GM12878 (cell line): ENCODE measurements at regions of chr10 and their contacts with region 1.

Region 1: DNA sequence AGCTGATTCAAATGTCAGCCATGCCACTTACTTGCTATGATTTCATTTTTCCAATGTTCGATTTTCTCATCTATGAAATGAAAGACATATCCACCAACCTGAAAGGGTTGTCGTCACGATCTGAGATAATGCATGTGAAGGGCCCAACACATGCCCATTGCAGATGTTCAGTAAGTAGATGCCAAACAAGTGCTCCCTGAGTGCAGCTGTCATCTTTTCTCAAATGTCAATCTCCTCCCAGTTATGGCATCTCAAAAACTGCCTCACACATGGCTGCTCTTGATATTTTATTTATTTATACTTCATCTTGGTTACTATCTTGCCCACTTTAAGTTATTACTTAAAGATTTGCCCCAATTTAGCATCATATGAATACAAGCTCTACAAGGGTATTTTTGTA is 16.8 kb downstream of the CPEB3 start:
- DNase-seq: no peak
- ATAC-seq: no peak
- H3K4me3 ChIP-seq: no peak overlapping the region
- H3K27ac ChIP-seq: no peak overlapping the region
- H3K4me1 ChIP-seq: peaks cover under 1% of the 10 kb centered on the region; the same call in 1 of the 2 replicates
- H3K27me3 ChIP-seq: no peaks in the 10 kb centered on the region
- CTCF ChIP-seq: no peak
- EP300 ChIP-seq: no peak
- POLR2A ChIP-seq: no peak
- RAD21 ChIP-seq: no peak

Region 2: DNA sequence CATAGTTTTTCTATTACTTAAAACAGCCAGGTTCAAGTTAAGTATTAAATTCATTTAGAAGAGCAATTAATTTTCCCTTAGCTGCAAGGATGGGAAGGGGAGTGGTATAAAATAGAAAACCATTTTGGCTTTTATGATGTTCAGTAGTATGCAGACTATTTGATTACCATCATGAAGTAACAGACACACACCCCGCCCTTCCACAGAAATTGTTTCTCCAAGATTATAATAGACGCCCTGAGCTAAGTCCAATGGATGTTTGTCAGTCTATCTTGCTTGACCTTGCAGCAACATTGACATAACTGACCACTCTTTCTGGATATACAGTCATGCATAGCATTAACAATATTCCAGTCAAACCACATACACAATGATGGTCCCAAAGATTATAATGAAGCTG is 25.5 kb before region 1 on chr10:
- CTCF ChIA-PET with region 1: no interaction called
- POLR2A ChIA-PET with region 1: no interaction called
- RAD21 ChIA-PET with region 1: interaction called, 4 read pairs
- SMC1A ChIA-PET with region 1: interaction called, 10 read pairs
- in situ Hi-C with region 1: no loop called
- intact Hi-C with region 1: no loop called
- DNase-seq: no peak
- ATAC-seq: no peak
- H3K4me3 ChIP-seq: no peak overlapping the region
- H3K27ac ChIP-seq: no peak overlapping the region
- H3K4me1 ChIP-seq: peaks cover 8% of the 10 kb centered on the region
- H3K27me3 ChIP-seq: no peaks in the 10 kb centered on the region
- CTCF ChIP-seq: no peak
- EP300 ChIP-seq: no peak
- POLR2A ChIP-seq: no peak
- RAD21 ChIP-seq: no peak